Heart right ventricle (tissue), 16 donors: ENCODE measurements at regions of chr10 and their contacts with region 1.

Region 1: GRCh38 chr10:99595770-99596465 is 24.3 kb downstream of the SLC25A28 start:
- DNase-seq: no peak
- ATAC-seq: no peak
- H3K4me3 ChIP-seq: no peak overlapping the region
- H3K27ac ChIP-seq: no peak overlapping the region
- H3K4me1 ChIP-seq: no peaks in the 10 kb centered on the region
- H3K27me3 ChIP-seq: peaks cover 0 to 10% (median 1%) of the 10 kb centered on the region in 7 donors
- CTCF ChIP-seq: no peak

Region 2: DNA sequence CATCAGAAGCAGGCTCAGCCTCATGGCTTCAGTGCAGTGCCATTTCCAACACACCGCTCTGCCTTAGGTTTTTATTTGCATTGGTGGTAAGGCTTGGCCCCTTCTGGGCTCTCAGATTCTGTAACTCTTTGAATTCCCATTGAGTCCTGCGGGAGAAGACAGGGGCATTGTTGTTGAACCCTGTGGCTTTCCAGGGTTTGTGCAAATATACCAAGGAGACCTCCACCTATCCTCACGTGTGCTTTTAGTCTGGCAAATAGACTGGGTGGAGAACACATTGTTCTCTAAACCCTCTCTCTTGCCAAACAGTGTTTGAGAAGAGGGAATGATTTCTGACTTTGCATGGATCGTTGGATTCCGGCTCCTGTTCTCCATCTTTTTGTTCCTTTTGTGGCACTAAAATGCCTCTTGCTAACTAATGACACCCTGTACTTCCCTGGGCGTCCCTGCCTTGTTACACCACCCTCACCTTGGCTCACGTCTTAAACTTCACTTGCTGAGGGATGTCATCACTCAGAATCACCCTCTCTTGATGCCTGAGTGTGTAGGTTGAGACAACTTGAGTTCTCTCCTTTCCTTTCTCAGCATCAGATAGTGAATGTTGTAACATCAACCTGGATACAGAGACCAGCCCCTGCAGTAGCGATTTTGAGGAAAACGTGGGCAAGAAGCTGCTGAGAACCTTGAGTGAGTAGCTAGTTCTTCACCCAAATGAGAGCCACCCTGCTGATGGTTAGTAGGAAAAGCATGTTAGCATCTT is 206.0 kb before region 1 on chr10:
- intact Hi-C with region 1: loop called in 1 of 10 experiments (anchors 5 kb)
- DNase-seq: no peak
- ATAC-seq: no peak
- H3K4me3 ChIP-seq: no peak overlapping the region
- H3K27ac ChIP-seq: no peak overlapping the region
- H3K4me1 ChIP-seq: peaks cover 0 to 52% (median 13%) of the 10 kb centered on the region in 9 donors
- H3K27me3 ChIP-seq: no peaks in the 10 kb centered on the region
- CTCF ChIP-seq: no peak

Region 3: DNA sequence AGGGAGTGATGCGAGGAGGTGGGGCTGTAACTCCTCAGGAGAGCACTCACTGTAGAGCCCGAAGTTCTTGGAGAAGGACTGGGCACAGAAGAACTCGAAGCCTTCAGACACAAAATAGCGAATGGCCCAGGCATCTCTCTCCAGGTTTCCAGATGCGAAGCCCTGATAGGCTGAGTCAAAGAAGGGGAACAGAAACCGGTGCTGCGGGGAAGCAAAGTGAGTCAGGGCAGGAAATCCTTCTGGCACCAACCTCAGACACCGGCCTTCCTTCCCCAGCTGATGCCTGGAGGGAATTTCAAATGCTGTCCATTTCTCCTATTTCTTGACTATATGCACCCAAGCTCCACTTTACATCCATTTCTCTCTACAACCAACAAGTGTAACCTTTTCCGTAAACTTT is 192.2 kb before region 1 on chr10:
- intact Hi-C with region 1: no loop called
- DNase-seq: no peak
- ATAC-seq: peak in 2 of 8 donors; percentile 18 to 25
- H3K4me3 ChIP-seq: no peak overlapping the region
- H3K27ac ChIP-seq: no peak overlapping the region
- H3K4me1 ChIP-seq: peaks cover 0 to 6% (median 0%) of the 10 kb centered on the region in 9 donors
- H3K27me3 ChIP-seq: no peaks in the 10 kb centered on the region
- CTCF ChIP-seq: no peak

Region 4: GRCh38 chr10:99880080-99880835 is 284.3 kb after region 1 on chr10:
- intact Hi-C with region 1: no loop called
- DNase-seq: peak; percentile 44 to 45
- ATAC-seq: peak in 7 of 8 donors; percentile 57 to 84 (median 64)
- H3K4me3 ChIP-seq: no peak overlapping the region
- H3K27ac ChIP-seq: peak overlapping the region in 6 of 10 donors; percentile 3 to 61 (median 51)
- H3K4me1 ChIP-seq: peaks cover 0 to 12% (median 0%) of the 10 kb centered on the region in 9 donors
- H3K27me3 ChIP-seq: no peaks in the 10 kb centered on the region
- CTCF ChIP-seq: no peak